ENCODE measurements at regions of chr11 and their contacts with region 1.

Region 1: DNA sequence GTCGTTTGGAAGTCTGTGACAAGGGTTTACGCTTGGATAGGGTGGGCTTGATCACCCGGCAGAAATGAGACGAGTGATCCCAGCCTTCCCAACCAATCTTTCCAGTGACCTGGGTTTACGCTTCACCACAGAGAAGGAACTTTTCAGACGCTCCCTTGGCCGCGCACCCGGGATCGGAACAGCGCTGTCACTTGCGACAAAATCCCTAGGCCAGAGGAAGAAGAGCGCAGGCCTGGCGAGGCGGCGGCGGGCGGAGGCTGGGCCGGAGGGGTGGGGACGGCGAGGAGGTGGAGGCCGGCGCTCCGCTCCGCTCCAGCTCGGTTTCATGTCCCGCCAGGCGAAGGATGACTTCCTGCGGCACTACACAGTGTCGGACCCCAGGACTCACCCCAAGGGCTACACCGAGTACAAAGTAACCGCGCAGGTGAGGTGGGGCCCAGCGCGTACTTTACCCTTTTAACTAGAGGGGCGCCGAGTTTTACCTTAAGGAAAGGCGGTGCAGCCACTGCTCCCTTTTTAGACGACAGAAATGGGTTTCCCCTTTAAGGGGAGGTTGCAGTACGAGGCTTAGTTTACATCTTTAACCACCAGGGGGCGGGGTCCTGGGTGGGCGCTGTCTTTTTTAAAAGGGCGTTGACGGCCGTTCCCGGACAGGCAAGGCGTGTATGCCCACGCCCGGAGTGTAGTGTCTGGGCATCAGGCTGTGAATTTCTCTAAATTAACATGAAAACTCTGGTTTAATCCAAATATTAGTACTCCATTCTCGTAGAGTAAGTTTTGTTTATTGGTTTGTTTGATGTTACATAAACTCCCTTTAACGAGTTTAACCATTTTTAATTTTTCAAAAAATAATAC is at the start of gene SNX15:
- DNase-seq: peak; percentile 91 to 97 (median 95)
- H3K4me3 ChIP-seq: peak within 1 kb of the TSS in 3 of 4 donors; percentile 53 to 70 (median 64)
- H3K27ac ChIP-seq: peak within 1 kb of the TSS; percentile 75 to 96 (median 85)
- H3K4me1 ChIP-seq: peaks cover 6 to 16% of the 10 kb centered on the region in 2 donors
- H3K27me3 ChIP-seq: no peaks in the 10 kb centered on the region
- CTCF ChIP-seq: peak; percentile 68 to 90 (median 78)
- POLR2A ChIP-seq: peak; percentile 71 to 80
- total RNA-seq, gene SNX15: 21.0 to 35.9 (median 23.4) TPM

Region 2: DNA sequence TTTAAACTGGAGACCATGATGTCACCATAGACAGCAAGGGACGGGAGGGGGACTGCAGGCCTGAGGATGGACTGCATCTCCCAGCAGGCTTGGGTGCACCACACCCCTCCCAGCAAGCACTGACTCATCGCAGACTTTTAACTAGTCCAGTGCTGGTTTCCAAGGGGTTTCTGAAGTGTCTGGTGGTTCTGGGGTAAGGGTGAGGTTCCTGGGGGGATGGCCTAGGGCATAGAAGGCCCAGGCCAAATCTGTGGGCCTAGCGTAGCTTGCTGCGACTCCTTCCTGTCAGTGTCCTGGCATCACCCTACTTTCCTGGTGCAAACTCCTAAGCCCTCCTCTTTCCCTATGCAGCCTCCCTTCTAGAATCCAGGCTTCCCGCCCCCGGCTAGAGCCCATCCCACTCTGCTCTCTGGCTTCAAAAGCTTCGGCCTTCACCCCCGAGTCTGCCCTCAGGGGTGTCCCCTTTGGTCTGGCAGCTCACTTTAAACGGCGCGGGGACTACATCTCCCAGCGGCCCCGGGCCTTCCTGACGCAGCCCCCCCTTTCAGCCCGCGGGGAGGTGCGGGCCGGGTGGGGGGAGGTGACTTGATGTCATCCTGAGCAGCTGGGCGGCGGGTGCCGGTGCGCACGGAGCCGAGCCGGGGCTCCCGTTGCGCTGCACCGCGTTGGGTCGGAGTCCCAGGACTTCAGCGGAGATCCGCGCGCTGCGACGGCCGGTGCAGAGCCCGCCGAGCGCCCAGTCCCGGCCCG is 103.2 kb before region 1 on chr11 and contains the start of gene PPP2R5B:
- intact Hi-C with region 1: loop called in 1 of 2 experiments (anchors 10 kb)
- DNase-seq: peak; percentile 95 to 98 (median 97)
- H3K4me3 ChIP-seq: peak within 1 kb of the TSS; percentile 7 to 93 (median 62)
- H3K27ac ChIP-seq: peak within 1 kb of the TSS; percentile 32 to 92 (median 85)
- H3K4me1 ChIP-seq: peaks cover 12 to 19% of the 10 kb centered on the region in 2 donors
- H3K27me3 ChIP-seq: no peaks in the 10 kb centered on the region
- CTCF ChIP-seq: peak in 4 of 6 experiments; percentile 1 to 24 (median 5)
- POLR2A ChIP-seq: peak; percentile 76 to 89
- total RNA-seq, gene PPP2R5B: 7.8 to 26.6 (median 20.4) TPM

Region 3: DNA sequence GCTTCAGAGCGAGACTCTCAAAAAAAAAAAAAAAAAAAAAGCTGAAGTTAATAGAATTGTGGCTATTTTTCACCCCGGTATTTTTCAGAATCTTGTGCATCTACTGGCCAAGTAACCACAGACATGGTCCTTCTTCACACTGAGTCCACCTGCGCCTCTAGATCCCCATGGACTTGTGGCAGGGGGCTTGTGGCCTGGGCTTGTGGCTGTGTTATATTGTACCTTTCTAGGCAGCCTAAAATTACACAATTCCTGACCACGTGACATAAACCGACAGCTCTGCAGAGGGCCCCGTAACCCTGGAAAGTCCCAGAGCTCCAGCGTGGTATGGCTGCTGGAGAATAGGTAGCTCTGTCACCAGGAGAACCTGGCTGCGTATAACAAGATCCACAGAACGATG is 41.8 kb after region 1 on chr11:
- intact Hi-C with region 1: no loop called
- DNase-seq: no peak
- H3K4me3 ChIP-seq: no peak overlapping the region
- H3K27ac ChIP-seq: no peak overlapping the region
- H3K4me1 ChIP-seq: no peaks in the 10 kb centered on the region
- H3K27me3 ChIP-seq: no peaks in the 10 kb centered on the region
- CTCF ChIP-seq: no peak
- POLR2A ChIP-seq: no peak

Measured in adrenal gland (tissue), 19 donors.